GM10248 (cell line): ENCODE measurements at regions of chr14 and their contacts with region 1.

Region 1: GRCh38 chr14:76352639-76353281 is 23.2 kb upstream of the ESRRB start:
- DNase-seq: peak; percentile 82
- CTCF ChIP-seq: peak; percentile 92

Region 2: GRCh38 chr14:76050797-76051392 is 301.9 kb before region 1 on chr14:
- CTCF ChIA-PET with region 1: interaction called, 202 read pairs
- POLR2A ChIA-PET with region 1: no interaction called
- DNase-seq: peak; percentile 57
- CTCF ChIP-seq: peak; percentile 76

Region 3: DNA sequence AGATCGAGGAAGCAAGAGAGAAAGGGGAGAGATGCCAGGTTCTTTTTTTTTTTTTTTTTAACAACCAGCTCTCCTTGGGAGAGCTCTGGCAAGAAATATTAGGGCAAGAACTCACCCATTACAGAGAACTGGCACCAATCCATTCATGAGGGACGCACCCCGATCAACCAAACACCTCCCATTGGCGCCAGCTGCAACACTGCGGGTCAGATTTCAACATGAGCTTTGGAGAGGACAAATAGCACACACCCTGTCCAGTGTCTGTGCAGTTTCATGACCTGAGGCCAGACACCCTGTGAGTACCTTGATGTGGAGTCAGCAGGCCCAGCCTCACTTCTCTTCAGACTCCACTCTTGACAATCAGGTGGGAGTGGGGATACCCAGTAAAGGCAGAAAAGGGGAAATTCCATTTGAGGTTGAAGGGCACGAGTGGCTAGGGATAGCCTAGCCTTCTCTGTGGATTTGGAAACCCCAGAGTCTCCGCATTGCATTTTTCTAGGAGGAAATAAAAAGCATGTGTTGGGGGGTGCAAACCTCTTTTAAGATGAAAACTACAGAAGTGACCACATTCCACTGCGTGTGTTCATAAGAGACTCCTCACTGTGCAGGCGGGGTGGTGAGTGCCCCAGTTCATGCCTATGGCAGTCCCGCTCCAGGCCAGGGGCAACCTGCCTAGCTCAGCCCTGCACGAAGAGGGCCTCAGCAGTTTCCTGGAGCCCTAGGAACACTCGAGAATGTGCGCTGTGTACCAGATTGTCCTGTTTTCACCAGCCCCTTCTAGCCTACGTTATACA is 243.5 kb before region 1 on chr14:
- CTCF ChIA-PET with region 1: interaction called, 13 read pairs
- POLR2A ChIA-PET with region 1: no interaction called
- DNase-seq: no peak
- CTCF ChIP-seq: no peak

Region 4: GRCh38 chr14:76149196-76149595 is 203.6 kb before region 1 on chr14:
- CTCF ChIA-PET with region 1: interaction called, 13 read pairs
- POLR2A ChIA-PET with region 1: no interaction called
- DNase-seq: no peak
- CTCF ChIP-seq: no peak

Region 5: DNA sequence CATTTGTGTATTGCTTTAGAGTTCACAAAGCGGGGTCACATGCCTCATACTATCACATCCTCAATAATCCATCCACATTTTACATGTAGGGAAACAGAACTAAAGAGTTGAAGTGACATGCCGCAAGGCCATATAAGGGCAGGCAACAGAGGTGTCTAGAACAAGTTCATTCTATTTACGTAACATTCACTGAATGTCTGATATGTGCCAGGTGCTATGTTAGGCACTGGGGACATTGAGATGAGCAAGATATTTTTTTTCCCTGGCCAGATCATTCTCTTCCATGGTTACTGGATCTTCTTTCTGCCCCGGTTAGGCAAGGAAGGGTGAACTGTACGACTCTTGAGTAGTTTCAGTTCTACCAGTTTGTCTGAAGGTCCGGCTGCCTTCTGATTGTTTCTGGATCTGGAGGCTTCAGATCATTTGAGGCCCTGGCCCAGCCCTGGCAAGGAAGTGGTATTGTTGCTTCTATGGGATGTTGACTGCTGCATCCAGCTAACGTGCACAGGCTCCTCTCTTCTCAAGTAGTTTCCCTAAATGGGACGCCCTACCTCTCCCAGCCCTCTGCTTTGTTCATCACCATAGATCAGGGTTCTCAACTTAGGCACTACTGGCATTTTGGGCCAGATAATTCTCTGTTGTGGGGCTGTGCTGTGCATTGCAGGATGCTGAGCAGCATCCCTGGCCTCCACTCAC is 188.9 kb before region 1 on chr14:
- CTCF ChIA-PET with region 1: interaction called, 11 read pairs
- POLR2A ChIA-PET with region 1: no interaction called
- DNase-seq: no peak
- CTCF ChIP-seq: no peak

Region 6: GRCh38 chr14:76337635-76338545 is 14.9 kb before region 1 on chr14:
- CTCF ChIA-PET with region 1: interaction called, 18 read pairs
- POLR2A ChIA-PET with region 1: no interaction called
- DNase-seq: no peak
- CTCF ChIP-seq: no peak

Region 7: DNA sequence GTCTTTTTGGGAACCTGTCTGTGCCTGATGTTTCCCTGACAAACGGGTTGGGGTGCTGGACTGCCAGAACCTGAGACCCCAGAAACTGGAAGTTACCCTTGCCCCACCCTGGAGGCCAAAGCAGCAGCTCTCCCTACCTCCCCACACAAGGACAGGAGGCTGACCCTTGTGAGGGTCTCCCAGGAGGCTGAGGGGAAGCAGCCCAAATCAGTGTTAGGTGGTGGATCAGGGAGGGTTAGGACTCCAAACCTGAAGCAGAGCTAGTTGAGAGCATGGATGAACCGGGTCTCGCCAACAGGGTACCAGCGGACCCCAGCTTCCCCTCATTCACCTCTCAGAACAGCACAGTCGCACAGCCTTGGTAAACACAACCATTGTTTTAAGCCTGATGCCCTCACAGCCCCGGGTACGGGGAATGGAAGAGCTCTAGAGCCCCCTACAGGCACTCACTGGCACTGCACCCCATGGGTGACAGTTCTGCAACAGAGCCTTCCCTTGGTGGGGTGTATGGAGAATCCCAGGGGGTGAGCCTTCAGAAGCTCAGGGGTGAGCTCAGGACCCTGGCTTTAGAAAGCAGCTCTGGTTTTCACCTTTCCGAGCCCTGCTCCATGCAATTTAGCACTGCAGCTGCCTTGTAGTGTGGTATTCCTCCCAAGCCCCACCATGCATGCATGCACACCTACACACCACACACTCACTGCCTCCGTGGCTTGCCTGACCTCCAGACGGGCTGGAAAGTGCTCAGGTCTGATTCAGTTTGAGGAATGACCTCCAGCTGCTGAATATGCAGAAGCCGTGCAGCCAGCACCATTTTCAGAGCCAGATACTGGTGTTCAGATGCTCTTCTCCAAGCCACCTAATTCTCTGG is 34.4 kb after region 1 on chr14:
- CTCF ChIA-PET with region 1: interaction called, 24 read pairs
- POLR2A ChIA-PET with region 1: no interaction called
- DNase-seq: peak; percentile 87
- CTCF ChIP-seq: peak; percentile 98